BJ (cell line): ENCODE measurements at regions of chr10 and their contacts with region 1.

Region 1: DNA sequence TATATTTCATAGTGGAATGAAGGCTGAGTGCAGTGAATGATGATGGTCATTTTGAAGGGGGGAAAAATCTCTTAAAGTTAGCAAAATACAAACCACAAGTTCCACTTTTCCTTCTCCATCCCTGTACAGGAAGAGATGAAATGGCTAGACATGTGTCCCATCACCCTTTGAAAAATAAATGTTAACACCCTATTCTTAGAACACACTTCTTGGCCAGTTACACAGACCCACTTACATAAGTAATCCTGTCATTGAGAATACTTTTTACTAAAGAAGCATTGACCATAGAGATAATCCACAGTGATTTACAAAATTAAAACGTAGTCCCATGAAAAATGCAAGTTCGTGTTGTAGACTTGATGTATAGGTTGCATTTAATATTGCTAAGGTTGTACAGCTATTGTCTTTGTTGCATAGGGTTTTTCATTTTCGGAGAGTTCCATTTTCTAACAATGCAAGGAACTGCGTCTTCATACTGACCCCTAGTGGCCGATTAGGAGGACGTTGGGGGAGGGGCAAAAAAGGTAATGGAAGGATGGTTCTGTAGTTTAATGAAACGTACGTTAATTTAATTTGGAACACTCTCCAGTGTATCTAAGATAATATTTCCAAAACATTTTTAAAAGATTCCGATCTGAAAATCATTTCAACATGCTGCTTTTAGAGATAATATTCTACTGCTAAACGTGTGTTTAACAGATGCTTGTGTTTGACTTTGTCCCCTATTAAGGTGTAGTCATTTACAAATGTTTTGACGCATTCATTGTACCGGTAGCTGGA is 60.9 kb downstream of the ARMC3 start:
- DNase-seq: no peak
- H3K4me3 ChIP-seq: no peak overlapping the region
- H3K27me3 ChIP-seq: peaks cover 10% of the 10 kb centered on the region
- CTCF ChIP-seq: peak; percentile 86

Region 2: GRCh38 chr10:22003079-22003913 is 985.5 kb before region 1 on chr10 and contains the start of gene DNAJC1:
- CTCF ChIA-PET with region 1: interaction called, 75 read pairs
- POLR2A ChIA-PET with region 1: no interaction called
- DNase-seq: peak; percentile 47
- H3K4me3 ChIP-seq: peak within 1 kb of the TSS; percentile 98
- H3K27me3 ChIP-seq: peaks cover 5% of the 10 kb centered on the region
- CTCF ChIP-seq: no peak
- polyA plus RNA-seq, gene DNAJC1: 33.2 and 35.2 TPM in 2 replicates

Region 3: GRCh38 chr10:22010973-22011408 is 977.8 kb before region 1 on chr10:
- CTCF ChIA-PET with region 1: interaction called, 75 read pairs
- POLR2A ChIA-PET with region 1: no interaction called
- DNase-seq: no peak
- H3K4me3 ChIP-seq: no peak overlapping the region
- H3K27me3 ChIP-seq: 0 out of 2 replicates have a peak, but pooled peaks cover 1% of the 10 kb centered on the region
- CTCF ChIP-seq: peak; percentile 18; the same call in 1 of the 2 replicates

Region 4: DNA sequence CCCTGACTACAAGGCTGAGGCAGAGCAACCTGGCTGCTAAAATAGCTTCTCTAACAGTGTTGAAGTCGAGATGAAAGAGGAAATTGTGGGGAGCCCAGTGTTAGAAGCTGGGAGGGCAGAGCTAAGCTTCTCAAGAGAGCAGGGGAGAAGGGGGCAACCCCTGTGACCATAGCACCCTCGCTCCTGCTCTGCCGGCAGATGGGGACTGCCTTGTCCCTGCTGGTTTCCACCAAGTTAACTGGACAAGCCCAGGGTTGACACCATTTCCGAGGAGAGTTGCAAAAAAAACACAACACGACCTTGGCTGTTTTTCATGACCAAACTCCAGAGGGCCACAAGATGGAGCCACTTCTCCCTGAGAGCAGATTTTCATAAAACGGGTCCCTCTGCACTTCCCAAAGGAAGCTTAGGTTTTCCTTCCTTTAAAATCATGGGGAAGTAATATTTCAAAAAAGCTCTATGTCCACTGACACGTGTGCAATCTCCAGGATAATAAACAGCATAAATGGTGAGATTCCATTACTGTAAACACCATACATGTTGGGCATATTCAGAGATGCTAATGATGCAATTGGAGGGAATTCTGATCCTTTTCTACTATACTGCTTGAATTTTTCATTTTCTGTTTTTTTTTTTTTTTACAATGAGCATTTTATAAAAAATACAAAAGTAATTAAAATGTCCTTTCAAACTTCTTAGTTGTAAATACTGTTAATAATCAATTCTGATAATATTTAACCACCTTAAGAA is 414.8 kb before region 1 on chr10:
- CTCF ChIA-PET with region 1: interaction called, 25 read pairs
- POLR2A ChIA-PET with region 1: no interaction called
- DNase-seq: no peak
- H3K4me3 ChIP-seq: no peak overlapping the region
- H3K27me3 ChIP-seq: no peaks in the 10 kb centered on the region
- CTCF ChIP-seq: peak; percentile 55

Region 5: DNA sequence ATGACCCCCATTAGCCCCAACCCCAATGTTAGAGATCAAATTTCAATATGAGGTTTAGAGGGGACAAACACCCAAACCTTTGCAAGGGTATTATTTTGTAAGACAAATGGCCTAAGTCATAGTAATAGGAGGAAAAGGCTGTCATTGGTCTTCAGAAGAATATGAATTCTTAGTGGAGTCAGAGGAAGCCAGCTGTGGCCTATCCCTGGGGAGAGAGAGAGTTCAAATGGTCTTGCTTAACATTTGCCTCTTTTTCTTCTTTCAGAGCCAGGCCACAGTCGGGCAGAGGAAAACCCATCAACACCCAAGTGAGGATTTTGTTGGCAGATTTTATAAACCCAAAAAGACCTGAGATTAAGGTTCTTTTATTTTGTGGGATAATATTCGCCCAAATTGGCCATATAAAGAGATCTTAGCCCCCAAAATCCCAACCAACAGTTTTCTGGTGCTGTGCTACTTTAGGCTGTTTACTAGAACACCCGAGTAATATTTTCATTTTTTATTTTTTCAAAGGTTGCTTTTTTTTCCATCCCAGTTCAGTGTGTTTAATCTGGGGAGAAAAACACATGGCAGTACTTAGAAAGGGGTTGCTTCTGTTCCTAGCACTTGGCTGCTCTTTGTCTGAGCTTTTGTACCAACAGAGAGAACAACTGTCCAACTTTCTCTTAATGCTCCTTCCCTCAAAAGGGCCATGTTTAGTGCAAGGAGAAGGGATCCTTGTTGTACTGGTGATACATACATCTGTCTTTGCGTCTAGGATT is 87.8 kb before region 1 on chr10:
- CTCF ChIA-PET with region 1: no interaction called
- POLR2A ChIA-PET with region 1: no interaction called
- DNase-seq: no peak
- H3K4me3 ChIP-seq: no peak overlapping the region
- H3K27me3 ChIP-seq: no peaks in the 10 kb centered on the region
- CTCF ChIP-seq: no peak